Activated CD4-positive, alpha-beta T cell treated with anti-CD3 and anti-CD28 coated beads for 36 hours (primary cell): ENCODE measurements at regions of chr16 and their contacts with region 1.

Region 1: GRCh38 chr16:56576585-56577293 is 11.9 kb downstream of the MT4 start:
- DNase-seq: peak; percentile 95
- ATAC-seq: peak; percentile 100
- H3K4me3 Mint-ChIP-seq: no peak overlapping the region
- H3K27ac Mint-ChIP-seq: peak overlapping the region; percentile 70
- H3K4me1 Mint-ChIP-seq: peaks cover 4% of the 10 kb centered on the region
- H3K27me3 Mint-ChIP-seq: no peaks in the 10 kb centered on the region

Region 2: GRCh38 chr16:56600398-56600999 is 23.8 kb after region 1 on chr16:
- CTCF ChIA-PET with region 1: interaction called, 16 read pairs
- POLR2A ChIA-PET with region 1: no interaction called
- intact Hi-C with region 1: loop called in 1 of 2 experiments (anchors 1 kb)
- DNase-seq: peak; percentile 53
- ATAC-seq: peak; percentile 64
- H3K4me3 Mint-ChIP-seq: no peak overlapping the region
- H3K27ac Mint-ChIP-seq: no peak overlapping the region
- H3K4me1 Mint-ChIP-seq: peaks cover 6% of the 10 kb centered on the region
- H3K27me3 Mint-ChIP-seq: peaks cover 6% of the 10 kb centered on the region

Region 3: DNA sequence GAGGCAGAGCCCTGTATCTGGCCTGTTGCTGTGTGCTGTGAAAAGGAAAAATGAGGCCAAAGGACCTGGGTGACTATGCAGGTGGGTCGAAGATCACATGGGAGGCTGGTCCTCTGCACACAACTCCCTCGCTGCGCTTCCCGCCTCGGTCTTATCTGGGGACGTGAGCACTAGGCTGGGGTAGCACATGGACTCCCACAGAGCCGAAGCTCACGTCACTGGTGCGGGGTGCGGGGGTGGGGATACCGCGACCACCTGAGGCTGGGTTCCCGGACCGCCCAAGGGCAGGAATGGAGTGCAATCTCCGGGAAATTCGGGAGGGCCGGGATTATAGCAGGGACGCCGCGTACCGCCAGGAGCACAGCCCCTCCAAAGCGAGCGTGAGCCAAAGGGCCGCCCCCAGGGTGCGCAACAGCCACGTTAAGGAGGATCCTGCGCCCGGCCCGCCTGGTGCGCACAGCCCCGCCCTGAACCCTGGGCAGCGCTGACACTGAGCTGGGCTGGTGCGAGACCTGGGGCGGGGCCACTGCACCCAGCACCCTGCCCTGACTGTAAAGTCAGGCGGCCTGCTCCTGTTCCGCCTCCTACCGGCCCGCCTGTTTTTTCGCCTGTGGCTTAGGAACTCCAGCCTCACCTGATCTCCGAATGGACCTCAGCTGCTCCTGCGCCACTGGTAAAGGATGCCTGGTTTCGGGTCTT is 66.5 kb after region 1 on chr16:
- CTCF ChIA-PET with region 1: interaction called, 7 read pairs
- POLR2A ChIA-PET with region 1: no interaction called
- intact Hi-C with region 1: loop called (anchors 1 to 5 kb)
- DNase-seq: peak; percentile 90
- ATAC-seq: peak; percentile 100
- H3K4me3 Mint-ChIP-seq: peak overlapping the region; percentile 39
- H3K27ac Mint-ChIP-seq: peak overlapping the region; percentile 39
- H3K4me1 Mint-ChIP-seq: peaks cover 20% of the 10 kb centered on the region
- H3K27me3 Mint-ChIP-seq: peaks cover 43% of the 10 kb centered on the region

Region 4: GRCh38 chr16:56681939-56682702 is 105.4 kb after region 1 on chr16 and contains the start of gene MT1X:
- CTCF ChIA-PET with region 1: interaction called, 3 read pairs
- POLR2A ChIA-PET with region 1: no interaction called
- intact Hi-C with region 1: loop called (anchors 1 to 5 kb)
- DNase-seq: peak; percentile 96
- ATAC-seq: peak; percentile 96
- H3K4me3 Mint-ChIP-seq: peak within 1 kb of the TSS; percentile 89
- H3K27ac Mint-ChIP-seq: peak within 1 kb of the TSS; percentile 97
- H3K4me1 Mint-ChIP-seq: peaks cover 22% of the 10 kb centered on the region
- H3K27me3 Mint-ChIP-seq: no peaks in the 10 kb centered on the region
- total RNA-seq, gene MT1X: 46.8 to 59.3 TPM

Region 5: DNA sequence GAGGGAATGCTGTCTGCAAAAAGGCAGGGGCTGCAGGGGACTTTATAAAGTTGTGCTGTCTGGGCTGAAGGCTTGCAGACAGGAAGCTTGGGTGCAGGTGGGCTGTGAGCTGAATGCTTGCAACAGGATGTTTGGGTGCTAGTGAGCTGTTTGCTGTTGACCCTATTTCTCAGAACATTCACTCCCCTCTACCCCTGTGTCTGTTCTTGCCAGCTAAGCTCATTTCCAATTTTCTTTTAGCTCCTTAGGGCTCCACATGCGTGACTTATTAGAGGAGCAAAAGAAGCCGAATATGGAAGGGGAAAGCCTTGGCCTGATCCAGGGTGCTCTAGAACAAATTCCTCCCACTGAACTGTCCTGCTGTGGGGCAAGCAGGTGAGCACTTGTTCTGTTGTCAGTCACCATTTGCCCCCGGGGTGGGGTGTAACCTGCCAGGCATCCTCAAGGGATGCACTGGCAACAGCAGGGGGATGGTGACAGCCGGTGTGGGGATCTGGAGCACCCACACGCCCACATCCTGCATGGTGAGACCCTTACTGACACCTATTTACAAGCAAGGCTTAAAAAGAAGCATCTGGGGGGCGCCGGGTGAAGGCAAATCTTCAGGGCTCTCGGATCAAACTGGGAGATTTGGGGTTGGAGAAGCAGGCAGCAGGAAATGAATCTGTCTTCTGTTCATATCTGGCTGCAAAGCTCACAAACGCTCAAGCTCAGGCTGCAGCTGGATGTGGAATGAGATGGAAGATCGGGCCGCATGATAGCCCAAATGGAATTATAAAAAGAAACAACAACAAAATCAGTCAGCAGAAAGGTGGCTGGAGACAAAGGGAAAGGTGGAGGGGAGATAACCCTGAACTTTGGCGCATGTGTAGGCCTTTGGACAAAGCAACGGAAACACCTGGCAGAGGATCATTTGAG is 132.0 kb after region 1 on chr16:
- CTCF ChIA-PET with region 1: interaction called, 74 read pairs
- POLR2A ChIA-PET with region 1: no interaction called
- intact Hi-C with region 1: no loop called
- DNase-seq: peak; percentile 30
- ATAC-seq: peak; percentile 64
- H3K4me3 Mint-ChIP-seq: peak overlapping the region; percentile 1
- H3K27ac Mint-ChIP-seq: peak overlapping the region; percentile 67
- H3K4me1 Mint-ChIP-seq: peaks cover 14% of the 10 kb centered on the region
- H3K27me3 Mint-ChIP-seq: no peaks in the 10 kb centered on the region

Region 6: DNA sequence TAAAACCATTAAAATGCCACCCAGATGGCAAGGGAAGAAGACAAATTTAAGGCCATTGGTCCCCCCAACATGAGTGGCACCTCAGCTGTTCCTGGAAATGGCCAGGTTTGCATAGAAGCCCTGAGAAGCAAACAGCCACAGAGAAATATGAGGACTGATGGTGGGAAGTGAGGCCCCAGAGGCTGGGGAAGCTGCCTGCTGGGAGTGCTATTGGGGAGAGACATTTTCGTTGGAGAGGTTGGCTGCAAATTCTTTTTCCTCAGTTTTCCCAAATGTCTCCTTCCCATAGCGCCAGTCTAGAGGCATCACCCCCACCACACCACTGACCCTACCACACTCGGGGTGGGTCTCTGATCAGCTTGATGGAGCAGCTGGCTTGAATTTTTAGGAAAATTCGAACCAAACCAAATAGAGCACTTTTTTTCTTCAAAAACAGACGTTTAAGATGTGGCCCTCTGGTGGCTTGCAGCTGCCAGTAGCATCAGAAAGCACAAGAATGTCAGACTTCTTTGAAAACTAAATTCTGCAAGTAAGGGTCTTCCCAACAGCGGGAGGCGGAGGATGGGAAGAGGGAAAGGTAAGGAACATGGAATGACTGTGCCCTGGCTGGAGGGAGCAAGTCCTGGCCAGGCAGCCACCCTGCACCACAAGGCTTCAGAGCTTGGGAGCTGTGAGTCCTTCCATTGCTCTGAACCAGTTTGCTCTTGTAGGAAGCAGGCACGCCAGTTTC is 275.1 kb after region 1 on chr16:
- CTCF ChIA-PET with region 1: interaction called, 3 read pairs
- POLR2A ChIA-PET with region 1: no interaction called
- intact Hi-C with region 1: loop called in 1 of 2 experiments (anchors 10 kb)
- DNase-seq: no peak
- ATAC-seq: no peak
- H3K4me3 Mint-ChIP-seq: no peak overlapping the region
- H3K27ac Mint-ChIP-seq: no peak overlapping the region
- H3K4me1 Mint-ChIP-seq: peaks cover 17% of the 10 kb centered on the region
- H3K27me3 Mint-ChIP-seq: no peaks in the 10 kb centered on the region